ENCODE measurements at regions of chr6 and their contacts with region 1.

Region 1: GRCh38 chr6:138979813-138980668 is 8.0 kb downstream of the REPS1 start:
- DNase-seq: no peak
- ATAC-seq: no peak
- H3K4me3 ChIP-seq: no peak overlapping the region
- H3K4me3 Mint-ChIP-seq: no peak overlapping the region
- H3K27ac ChIP-seq: no peak overlapping the region
- H3K27ac Mint-ChIP-seq: no peak overlapping the region
- H3K4me1 ChIP-seq: peaks cover 33% of the 10 kb centered on the region
- H3K4me1 Mint-ChIP-seq: peaks cover 25% of the 10 kb centered on the region
- H3K27me3 ChIP-seq: no peaks in the 10 kb centered on the region
- H3K27me3 Mint-ChIP-seq: no peaks in the 10 kb centered on the region
- CTCF ChIP-seq: no peak

Region 2: DNA sequence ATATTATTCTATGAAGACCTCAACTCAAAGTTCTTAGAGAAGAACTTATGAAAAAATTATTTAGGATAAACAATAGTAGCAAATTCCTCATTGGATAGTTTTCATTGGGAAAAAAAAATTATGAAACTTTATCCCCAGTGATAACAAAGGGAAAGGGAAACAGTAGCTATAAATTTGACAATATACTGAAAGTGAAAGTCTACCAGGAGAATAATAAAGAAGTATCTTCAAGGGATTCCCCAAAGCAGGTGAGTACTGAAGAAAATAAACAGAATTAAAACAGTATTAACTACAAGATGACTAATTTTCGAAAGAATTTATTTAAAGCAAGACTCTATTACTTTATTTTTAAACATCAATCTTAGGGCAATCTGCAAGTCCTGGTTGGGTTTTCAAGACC is 48.4 kb before region 1 on chr6:
- CTCF ChIA-PET with region 1: no interaction called
- POLR2A ChIA-PET with region 1: no interaction called
- intact Hi-C with region 1: loop called in 1 of 2 experiments (anchors 5 kb)
- DNase-seq: no peak
- ATAC-seq: no peak
- H3K4me3 ChIP-seq: no peak overlapping the region
- H3K4me3 Mint-ChIP-seq: no peak overlapping the region
- H3K27ac ChIP-seq: no peak overlapping the region
- H3K27ac Mint-ChIP-seq: no peak overlapping the region
- H3K4me1 ChIP-seq: no peaks in the 10 kb centered on the region
- H3K4me1 Mint-ChIP-seq: peaks cover 10% of the 10 kb centered on the region
- H3K27me3 ChIP-seq: no peaks in the 10 kb centered on the region
- H3K27me3 Mint-ChIP-seq: no peaks in the 10 kb centered on the region
- CTCF ChIP-seq: no peak